ENCODE measurements at regions of chr5 and their contacts with region 1.

Region 1: GRCh38 chr5:93800988-93801811 is 59.8 kb upstream of the POU5F2 start:
- DNase-seq: no peak
- H3K4me3 ChIP-seq: no peak overlapping the region
- H3K27ac ChIP-seq: no peak overlapping the region
- H3K27me3 ChIP-seq: no peaks in the 10 kb centered on the region
- CTCF ChIP-seq: peak; percentile 67

Region 2: GRCh38 chr5:93582677-93583438 is 218.3 kb before region 1 on chr5 and contains the start of gene NR2F1:
- CTCF ChIA-PET with region 1: interaction called, 14 read pairs
- POLR2A ChIA-PET with region 1: interaction called, 4 read pairs
- DNase-seq: peak; percentile 99
- H3K4me3 ChIP-seq: peak within 1 kb of the TSS; percentile 92
- H3K27ac ChIP-seq: peak within 1 kb of the TSS; percentile 81
- H3K27me3 ChIP-seq: no peaks in the 10 kb centered on the region
- CTCF ChIP-seq: no peak
- polyA plus RNA-seq, gene NR2F1: 47.9 and 65.5 TPM in 2 replicates

Region 3: GRCh38 chr5:93599399-93600120 is 201.6 kb before region 1 on chr5:
- CTCF ChIA-PET with region 1: interaction called, 21 read pairs
- POLR2A ChIA-PET with region 1: no interaction called
- DNase-seq: no peak
- H3K4me3 ChIP-seq: peak overlapping the region; percentile 40
- H3K27ac ChIP-seq: peak overlapping the region; percentile 75
- H3K27me3 ChIP-seq: no peaks in the 10 kb centered on the region
- CTCF ChIP-seq: no peak

Region 4: DNA sequence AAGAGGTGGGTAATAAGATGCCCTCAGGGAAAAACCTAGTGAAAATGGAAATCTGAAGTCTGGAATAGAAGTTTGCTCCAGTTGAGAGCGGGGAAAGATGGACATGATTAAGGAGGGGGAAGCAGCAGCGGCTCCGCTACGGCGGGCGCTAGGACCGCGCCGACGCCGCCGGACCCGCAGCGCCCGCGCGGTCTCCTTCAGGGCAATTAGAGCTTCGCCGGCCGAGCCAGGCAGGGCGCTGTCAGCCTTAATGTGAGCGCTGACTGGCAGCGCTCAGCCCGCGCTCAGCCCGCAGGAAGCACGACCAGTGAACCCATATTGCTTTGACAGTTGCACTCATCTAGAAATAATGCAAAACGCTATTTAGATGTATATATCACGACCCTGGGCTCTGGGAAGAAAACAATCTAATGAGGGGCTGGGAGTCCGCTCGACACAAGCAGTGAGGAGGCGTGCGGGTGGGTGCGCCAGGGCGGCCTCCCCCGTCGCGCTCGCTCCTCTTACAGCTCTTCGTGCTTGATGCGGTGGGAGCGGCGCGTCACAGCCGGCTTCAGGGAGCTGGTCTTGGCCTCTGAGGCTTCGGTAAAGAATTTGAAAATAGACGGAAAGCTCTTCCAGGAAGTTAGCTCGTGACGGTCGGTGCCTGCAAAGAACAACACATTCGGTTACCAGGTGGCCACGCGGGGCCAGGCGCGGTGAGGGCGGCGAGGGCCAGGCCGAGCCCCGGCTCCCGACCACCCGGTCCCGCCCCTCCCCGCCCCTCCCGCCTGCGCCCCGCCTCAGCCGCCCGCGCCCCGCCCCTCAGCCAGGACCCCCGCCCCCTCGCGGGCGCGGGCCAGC is 180.5 kb before region 1 on chr5:
- CTCF ChIA-PET with region 1: interaction called, 10 read pairs
- POLR2A ChIA-PET with region 1: interaction called, 4 read pairs
- DNase-seq: no peak
- H3K4me3 ChIP-seq: peak overlapping the region; percentile 72
- H3K27ac ChIP-seq: peak overlapping the region; percentile 59
- H3K27me3 ChIP-seq: no peaks in the 10 kb centered on the region
- CTCF ChIP-seq: no peak

Region 5: GRCh38 chr5:93782978-93783377 is 18.2 kb before region 1 on chr5:
- CTCF ChIA-PET with region 1: interaction called, 21 read pairs
- POLR2A ChIA-PET with region 1: no interaction called
- DNase-seq: no peak
- H3K4me3 ChIP-seq: no peak overlapping the region
- H3K27ac ChIP-seq: no peak overlapping the region
- H3K27me3 ChIP-seq: no peaks in the 10 kb centered on the region
- CTCF ChIP-seq: no peak

Region 6: DNA sequence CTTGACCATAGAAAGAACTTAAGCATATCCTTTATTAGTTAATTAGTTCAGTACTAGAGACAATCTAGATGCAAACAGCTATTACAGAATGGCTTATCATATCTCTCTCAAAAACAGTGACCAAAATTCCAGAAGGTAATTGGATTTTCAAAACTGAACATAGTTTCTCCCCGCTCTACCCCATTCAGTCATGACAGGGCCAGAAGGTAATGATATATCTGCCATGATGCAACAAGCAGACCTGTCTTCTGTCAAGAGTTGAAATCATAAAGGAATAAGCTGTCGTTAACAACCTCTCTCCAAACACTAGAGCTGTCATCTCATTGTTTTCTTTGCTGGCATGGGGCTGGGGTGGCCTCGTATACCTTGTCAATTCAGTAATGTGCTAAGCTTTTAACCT is 140.7 kb after region 1 on chr5:
- CTCF ChIA-PET with region 1: no interaction called
- POLR2A ChIA-PET with region 1: no interaction called
- DNase-seq: no peak
- H3K4me3 ChIP-seq: no peak overlapping the region
- H3K27ac ChIP-seq: no peak overlapping the region
- H3K27me3 ChIP-seq: no peaks in the 10 kb centered on the region
- CTCF ChIP-seq: no peak

Measured in AG04450 (cell line).